ENCODE measurements at regions of chr1 and their contacts with region 1.

Region 1: GRCh38 chr1:227437495-227438008 is 119.3 kb upstream of the CDC42BPA start:
- DNase-seq: peak; percentile 37
- H3K4me3 ChIP-seq: peak overlapping the region; percentile 25 to 41 (median 36)
- H3K27ac ChIP-seq: no peak overlapping the region
- H3K4me1 ChIP-seq: no peaks in the 10 kb centered on the region
- H3K27me3 ChIP-seq: no peaks in the 10 kb centered on the region
- CTCF ChIP-seq: peak; percentile 39 to 52

Region 2: DNA sequence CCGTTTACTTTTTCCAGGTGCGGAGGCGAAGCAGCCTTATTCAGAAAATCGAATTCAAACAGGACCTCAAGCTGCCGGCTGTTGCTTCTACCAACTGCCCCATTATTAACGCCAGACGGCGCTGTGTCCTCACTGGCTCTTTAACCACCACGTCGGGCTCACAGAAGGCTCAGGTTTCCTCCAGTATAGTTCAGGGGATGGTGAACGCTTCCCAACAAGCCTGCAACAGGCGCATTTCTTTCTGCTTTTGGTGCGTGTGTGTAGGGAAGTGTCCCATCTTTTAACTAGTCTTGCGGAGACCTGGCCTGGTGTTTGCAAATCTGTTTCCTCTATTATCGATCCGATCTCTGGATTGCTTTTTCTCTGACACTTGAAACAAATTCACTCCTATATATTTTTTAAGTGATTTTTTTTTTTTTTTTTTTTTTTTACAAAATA is 889.8 kb before region 1 on chr1:
- CTCF ChIA-PET with region 1: no interaction called
- dilution Hi-C with region 1: no loop called
- in situ Hi-C with region 1: no loop called
- intact Hi-C with region 1: loop called (anchors 10 kb)
- DNase-seq: peak; percentile 81
- H3K4me3 ChIP-seq: no peak overlapping the region
- H3K27ac ChIP-seq: no peak overlapping the region
- H3K4me1 ChIP-seq: peaks cover 21% of the 10 kb centered on the region
- H3K27me3 ChIP-seq: peaks cover 12% of the 10 kb centered on the region
- CTCF ChIP-seq: peak; percentile 98 to 99

Region 3: GRCh38 chr1:226736908-226737818 is 700.4 kb before region 1 on chr1:
- CTCF ChIA-PET with region 1: no interaction called
- dilution Hi-C with region 1: no loop called
- in situ Hi-C with region 1: no loop called
- intact Hi-C with region 1: loop called (anchors 10 kb)
- DNase-seq: peak; percentile 10
- H3K4me3 ChIP-seq: peak overlapping the region; percentile 67 to 89 (median 70)
- H3K27ac ChIP-seq: peak overlapping the region; percentile 53
- H3K4me1 ChIP-seq: peaks cover 22% of the 10 kb centered on the region
- H3K27me3 ChIP-seq: no peaks in the 10 kb centered on the region
- CTCF ChIP-seq: peak in 1 of 2 donors; percentile 13

Region 4: DNA sequence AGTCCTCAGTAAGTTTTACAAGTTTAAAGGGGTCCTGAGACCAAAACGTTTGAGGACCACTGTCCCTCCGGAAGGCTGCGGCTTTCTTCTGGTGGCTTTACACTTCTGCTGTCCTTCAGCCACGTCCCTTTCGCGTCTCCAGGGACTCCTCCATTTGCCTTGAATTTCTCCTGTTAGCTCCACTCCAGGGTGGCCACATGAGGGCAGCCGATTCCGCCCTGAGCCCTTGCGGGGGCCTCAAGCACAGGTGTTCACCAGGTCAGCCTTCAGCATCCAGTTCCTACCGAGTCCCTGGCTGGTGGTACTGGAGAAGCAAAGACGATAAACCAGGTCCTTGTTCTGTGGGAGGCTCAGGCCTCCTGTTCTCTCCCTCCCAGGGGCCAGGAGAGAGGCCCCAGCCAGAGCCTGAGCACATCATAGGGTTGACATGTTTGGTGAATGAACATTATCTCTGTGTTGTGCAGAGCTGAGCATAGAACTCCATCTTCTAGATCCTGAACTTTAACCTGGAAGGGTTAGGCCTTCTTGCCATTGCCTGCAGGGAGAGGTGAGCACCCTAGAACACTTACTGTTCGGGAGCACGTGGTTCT is 524.9 kb before region 1 on chr1:
- CTCF ChIA-PET with region 1: no interaction called
- dilution Hi-C with region 1: no loop called
- in situ Hi-C with region 1: loop called (anchors 10 to 25 kb)
- intact Hi-C with region 1: loop called (anchors 1 kb)
- DNase-seq: peak; percentile 17
- H3K4me3 ChIP-seq: no peak overlapping the region
- H3K27ac ChIP-seq: no peak overlapping the region
- H3K4me1 ChIP-seq: no peaks in the 10 kb centered on the region
- H3K27me3 ChIP-seq: no peaks in the 10 kb centered on the region
- CTCF ChIP-seq: peak; percentile 54 to 81

Region 5: DNA sequence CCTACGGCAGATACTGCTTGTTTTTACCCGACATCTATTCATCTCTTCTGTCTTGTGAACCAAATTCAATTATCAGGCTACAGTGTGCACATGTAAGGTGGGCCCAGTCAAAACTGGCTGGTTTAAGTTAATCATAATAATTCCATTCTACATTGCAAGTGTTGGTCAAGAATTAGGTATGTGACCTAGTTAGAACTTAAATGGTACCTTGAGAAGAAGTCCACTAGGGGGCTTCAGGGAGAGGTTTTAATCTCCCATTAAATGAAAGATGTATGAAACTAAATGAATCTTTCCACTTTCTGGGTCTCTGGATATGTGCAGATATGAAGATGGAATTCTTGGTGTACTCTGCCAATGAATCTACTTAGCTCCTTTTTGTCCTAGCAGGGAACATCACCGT is 306.4 kb before region 1 on chr1:
- CTCF ChIA-PET with region 1: no interaction called
- dilution Hi-C with region 1: no loop called
- in situ Hi-C with region 1: loop called (anchors 10 to 25 kb)
- intact Hi-C with region 1: loop called (anchors 1 kb)
- DNase-seq: peak; percentile 6
- H3K4me3 ChIP-seq: no peak overlapping the region
- H3K27ac ChIP-seq: no peak overlapping the region
- H3K4me1 ChIP-seq: no peaks in the 10 kb centered on the region
- H3K27me3 ChIP-seq: no peaks in the 10 kb centered on the region
- CTCF ChIP-seq: peak; percentile 45 to 47

Region 6: GRCh38 chr1:227318003-227318852 is 119.3 kb before region 1 on chr1 and contains the start of gene CDC42BPA:
- CTCF ChIA-PET with region 1: no interaction called
- dilution Hi-C with region 1: no loop called
- in situ Hi-C with region 1: no loop called
- intact Hi-C with region 1: loop called (anchors 1 kb)
- DNase-seq: peak; percentile 85
- H3K4me3 ChIP-seq: peak within 1 kb of the TSS; percentile 51 to 100 (median 94)
- H3K27ac ChIP-seq: peak within 1 kb of the TSS; percentile 85
- H3K4me1 ChIP-seq: peaks cover 4% of the 10 kb centered on the region
- H3K27me3 ChIP-seq: no peaks in the 10 kb centered on the region
- CTCF ChIP-seq: no peak
- total RNA-seq, gene CDC42BPA: 50.8 to 56.1 TPM

Region 7: DNA sequence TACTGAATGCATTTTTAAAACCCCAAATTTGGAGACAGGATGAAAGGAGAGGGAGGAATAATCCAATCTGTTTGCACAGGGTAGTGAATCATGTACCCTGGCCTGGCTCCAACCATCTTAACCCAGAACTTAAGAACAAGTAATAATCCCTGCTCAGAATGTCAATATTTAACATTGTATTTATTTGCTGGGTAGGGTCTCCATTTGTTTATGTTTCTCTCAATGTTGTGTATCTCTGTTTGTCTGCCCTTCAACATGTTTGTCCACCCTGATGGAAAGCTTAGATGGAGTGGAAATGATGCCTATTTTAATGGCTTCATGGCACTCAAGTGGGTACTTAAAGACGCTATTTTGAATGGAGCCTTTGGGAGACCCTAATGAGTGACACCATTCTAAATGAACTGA is 64.8 kb before region 1 on chr1:
- CTCF ChIA-PET with region 1: no interaction called
- dilution Hi-C with region 1: no loop called
- in situ Hi-C with region 1: no loop called
- intact Hi-C with region 1: no loop called
- DNase-seq: peak; percentile 19
- H3K4me3 ChIP-seq: no peak overlapping the region
- H3K27ac ChIP-seq: no peak overlapping the region
- H3K4me1 ChIP-seq: no peaks in the 10 kb centered on the region
- H3K27me3 ChIP-seq: no peaks in the 10 kb centered on the region
- CTCF ChIP-seq: no peak

Measured in mammary epithelial cell (primary cell).